Activated T-helper 1 cell treated with anti-CD3 and anti-CD28 coated beads, Interleukin-12 subunit alpha, Interleukin-12 subunit beta, Interleukin-2, Interleukin-4 antibody, amounts not matched to agents 30 ng/mL and 10 ng/mL and 1 ng/mL, durations not matched to agents 14 hours and 24 hours and 36 hours (primary cell): ENCODE measurements at regions of chr5 and their contacts with region 1.

Region 1: DNA sequence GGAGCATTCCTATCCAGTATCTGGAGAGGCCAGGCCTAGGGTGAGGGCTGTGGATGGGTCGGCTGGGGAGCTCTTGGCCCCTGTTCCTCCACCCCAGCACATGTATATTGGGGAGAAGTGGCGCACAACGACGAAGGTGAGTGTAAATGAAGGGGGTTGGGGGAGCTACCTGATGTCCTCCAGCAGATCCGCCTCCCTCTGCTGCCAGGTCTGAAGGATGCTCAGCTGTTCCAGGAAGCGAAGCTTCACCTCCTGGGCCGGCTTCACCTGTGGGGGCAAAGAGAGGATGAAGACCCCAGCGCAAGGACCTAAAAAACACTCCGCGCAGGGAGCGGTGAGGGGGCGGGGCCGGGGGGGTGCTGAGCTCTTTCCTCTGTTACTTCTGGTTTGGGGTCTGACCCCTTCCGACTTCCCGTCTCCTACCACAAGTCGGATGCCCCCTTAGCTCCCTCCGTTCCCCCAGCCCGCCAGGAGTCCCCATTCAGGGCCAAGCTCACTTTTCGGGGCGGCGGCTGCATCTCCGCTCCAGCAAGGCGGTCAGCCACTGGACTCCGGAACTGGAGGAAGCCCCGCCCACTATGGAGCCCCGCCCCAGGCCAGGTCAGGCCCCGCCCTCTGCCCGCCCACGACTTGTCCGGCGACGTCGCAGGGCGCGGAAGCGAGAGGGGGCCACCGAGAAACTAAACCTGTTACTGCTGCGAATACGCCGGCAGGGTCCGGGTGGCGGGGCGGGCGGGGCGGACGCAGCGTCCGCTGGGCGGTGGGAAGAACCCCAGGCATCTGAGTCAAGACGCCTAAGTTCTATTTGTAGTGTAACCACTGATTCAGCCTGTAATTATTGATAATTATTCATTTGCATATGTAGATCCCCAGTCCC is at the start of gene FCHSD1:
- DNase-seq: peak; percentile 76
- H3K4me3 Mint-ChIP-seq: peak within 1 kb of the TSS; percentile 98
- H3K27ac Mint-ChIP-seq: peak within 1 kb of the TSS; percentile 92
- H3K4me1 Mint-ChIP-seq: peaks cover 43% of the 10 kb centered on the region
- H3K27me3 Mint-ChIP-seq: no peaks in the 10 kb centered on the region
- total RNA-seq, gene FCHSD1: 37.0 and 37.1 TPM in 2 replicates

Region 2: GRCh38 chr5:141585594-141585993 is 65.5 kb before region 1 on chr5:
- intact Hi-C with region 1: no loop called
- DNase-seq: no peak
- H3K4me3 Mint-ChIP-seq: no peak overlapping the region
- H3K27ac Mint-ChIP-seq: no peak overlapping the region
- H3K4me1 Mint-ChIP-seq: peaks cover 15% of the 10 kb centered on the region
- H3K27me3 Mint-ChIP-seq: no peaks in the 10 kb centered on the region

Region 3: GRCh38 chr5:141605523-141606277 is 45.4 kb before region 1 on chr5:
- intact Hi-C with region 1: loop called (anchors 1 kb)
- DNase-seq: peak; percentile 76
- H3K4me3 Mint-ChIP-seq: peak overlapping the region; percentile 45
- H3K27ac Mint-ChIP-seq: peak overlapping the region; percentile 85
- H3K4me1 Mint-ChIP-seq: peaks cover 78% of the 10 kb centered on the region
- H3K27me3 Mint-ChIP-seq: no peaks in the 10 kb centered on the region

Region 4: DNA sequence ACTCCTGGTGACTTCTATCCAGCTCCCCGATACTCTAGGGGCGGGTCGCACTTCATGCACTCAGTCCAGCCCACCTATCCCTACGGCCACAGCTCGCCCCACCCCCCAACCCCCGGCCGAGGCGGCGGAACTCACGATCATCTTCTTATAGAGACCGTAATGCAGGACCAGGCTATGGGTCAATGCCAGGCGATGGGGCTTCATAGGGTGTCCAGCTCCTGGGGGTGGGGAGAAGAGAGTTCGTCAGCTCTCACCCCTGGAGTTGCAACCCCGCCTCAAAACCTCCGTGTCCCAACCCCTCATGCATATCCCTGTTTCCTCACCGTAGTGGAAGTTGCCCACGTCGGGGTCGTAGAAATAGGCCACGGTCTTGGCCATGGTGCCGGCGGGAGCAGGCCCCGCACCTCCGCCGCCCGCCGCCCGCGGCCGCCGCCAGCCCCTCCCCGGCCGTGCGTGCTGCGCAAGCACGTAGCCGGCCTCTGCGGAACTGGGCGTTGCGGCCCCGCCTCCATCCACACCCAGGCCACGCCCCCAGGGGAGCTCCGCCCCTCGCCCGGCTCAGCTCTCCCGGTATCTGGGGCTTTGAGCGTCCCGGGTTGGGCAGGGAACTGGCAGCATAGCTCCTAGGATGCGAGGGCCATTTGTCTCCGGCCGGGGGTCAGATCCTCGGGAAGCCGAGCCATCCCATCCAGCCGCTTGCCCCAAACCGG is 14.5 kb before region 1 on chr5 and contains the starts of genes HDAC3 and RELL2:
- intact Hi-C with region 1: loop called (anchors 1 kb)
- DNase-seq: peak; percentile 92
- H3K4me3 Mint-ChIP-seq: peak within 1 kb of the TSS; percentile 93
- H3K27ac Mint-ChIP-seq: peak within 1 kb of the TSS; percentile 80
- H3K4me1 Mint-ChIP-seq: peaks cover 53% of the 10 kb centered on the region
- H3K27me3 Mint-ChIP-seq: no peaks in the 10 kb centered on the region
- total RNA-seq, gene HDAC3: 83.1 and 87.2 TPM in 2 replicates
- total RNA-seq, gene RELL2: 19.3 and 19.5 TPM in 2 replicates

Region 5: GRCh38 chr5:141923448-141924352 is 272.6 kb after region 1 on chr5 and contains the start of gene DELE1:
- intact Hi-C with region 1: loop called (anchors 1 kb)
- DNase-seq: peak; percentile 88
- H3K4me3 Mint-ChIP-seq: peak within 1 kb of the TSS; percentile 92
- H3K27ac Mint-ChIP-seq: peak within 1 kb of the TSS; percentile 96
- H3K4me1 Mint-ChIP-seq: peaks cover 32% of the 10 kb centered on the region
- H3K27me3 Mint-ChIP-seq: no peaks in the 10 kb centered on the region
- total RNA-seq, gene DELE1: 68.4 and 81.5 TPM in 2 replicates